Activated CD4-positive, alpha-beta T cell treated with anti-CD3 and anti-CD28 coated beads, Interleukin-2, amount 10 ng/mL, durations not matched to agents 24 days and 14 days (primary cell): ENCODE measurements at regions of chr3 and their contacts with region 1.

Region 1: DNA sequence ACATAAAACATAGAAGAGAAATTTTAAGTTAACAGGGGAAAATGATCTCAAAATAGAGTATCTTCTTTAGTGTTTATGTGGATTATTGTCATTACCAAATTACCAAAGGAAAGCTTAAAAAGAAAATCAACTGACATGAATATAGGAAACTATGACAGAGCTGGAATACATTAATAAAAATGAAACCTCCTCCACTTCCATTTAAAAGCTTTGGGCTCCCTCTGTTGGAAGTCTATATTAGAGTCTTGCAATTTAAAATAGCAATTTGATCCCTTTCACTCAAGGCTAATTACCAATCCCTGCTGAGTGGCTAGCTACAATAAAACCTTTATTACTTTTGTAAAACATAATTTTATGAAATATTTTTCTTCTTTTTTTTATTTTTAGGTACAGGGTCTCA is 61.4 kb upstream of the IMPG2 start:
- DNase-seq: no peak
- H3K4me3 Mint-ChIP-seq: no peak overlapping the region
- H3K27ac Mint-ChIP-seq: no peak overlapping the region
- H3K4me1 Mint-ChIP-seq: peaks cover 27% of the 10 kb centered on the region
- H3K27me3 Mint-ChIP-seq: no peaks in the 10 kb centered on the region

Region 2: GRCh38 chr3:100316641-100317069 is 1065.2 kb before region 1 on chr3:
- intact Hi-C with region 1: loop called (anchors 2 kb)
- DNase-seq: peak; percentile 86
- H3K4me3 Mint-ChIP-seq: peak overlapping the region; percentile 40
- H3K27ac Mint-ChIP-seq: peak overlapping the region; percentile 55
- H3K4me1 Mint-ChIP-seq: peaks cover 11% of the 10 kb centered on the region
- H3K27me3 Mint-ChIP-seq: no peaks in the 10 kb centered on the region

Region 3: DNA sequence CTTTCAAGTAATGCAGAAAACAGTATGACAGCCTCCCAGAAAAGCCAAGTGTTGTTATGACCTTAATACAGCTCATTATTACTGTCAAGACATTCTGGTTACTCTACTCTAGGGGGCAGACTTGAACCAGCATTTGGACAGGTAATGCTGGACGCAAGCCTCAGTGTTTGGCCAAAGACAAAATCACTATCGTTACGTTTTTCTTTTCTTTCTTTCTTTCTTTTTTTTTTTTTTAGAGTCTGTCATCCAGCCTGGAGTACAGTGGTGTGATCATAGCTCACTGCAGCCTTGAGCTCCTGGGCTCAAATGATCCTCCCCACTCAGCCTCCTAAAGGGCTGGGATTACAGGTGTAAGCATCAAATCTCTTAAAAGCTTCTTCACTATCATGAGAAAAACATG is 918.8 kb before region 1 on chr3:
- intact Hi-C with region 1: loop called (anchors 2 kb)
- DNase-seq: peak; percentile 70
- H3K4me3 Mint-ChIP-seq: no peak overlapping the region
- H3K27ac Mint-ChIP-seq: no peak overlapping the region
- H3K4me1 Mint-ChIP-seq: peaks cover 5% of the 10 kb centered on the region
- H3K27me3 Mint-ChIP-seq: no peaks in the 10 kb centered on the region

Region 4: GRCh38 chr3:100737334-100737733 is 644.5 kb before region 1 on chr3:
- intact Hi-C with region 1: loop called (anchors 5 kb)
- DNase-seq: no peak
- H3K4me3 Mint-ChIP-seq: no peak overlapping the region
- H3K27ac Mint-ChIP-seq: no peak overlapping the region
- H3K4me1 Mint-ChIP-seq: peaks cover 13% of the 10 kb centered on the region
- H3K27me3 Mint-ChIP-seq: no peaks in the 10 kb centered on the region

Region 5: GRCh38 chr3:101017017-101017416 is 364.8 kb before region 1 on chr3:
- intact Hi-C with region 1: no loop called
- DNase-seq: no peak
- H3K4me3 Mint-ChIP-seq: no peak overlapping the region
- H3K27ac Mint-ChIP-seq: no peak overlapping the region
- H3K4me1 Mint-ChIP-seq: no peaks in the 10 kb centered on the region
- H3K27me3 Mint-ChIP-seq: peaks cover 2% of the 10 kb centered on the region

Region 6: DNA sequence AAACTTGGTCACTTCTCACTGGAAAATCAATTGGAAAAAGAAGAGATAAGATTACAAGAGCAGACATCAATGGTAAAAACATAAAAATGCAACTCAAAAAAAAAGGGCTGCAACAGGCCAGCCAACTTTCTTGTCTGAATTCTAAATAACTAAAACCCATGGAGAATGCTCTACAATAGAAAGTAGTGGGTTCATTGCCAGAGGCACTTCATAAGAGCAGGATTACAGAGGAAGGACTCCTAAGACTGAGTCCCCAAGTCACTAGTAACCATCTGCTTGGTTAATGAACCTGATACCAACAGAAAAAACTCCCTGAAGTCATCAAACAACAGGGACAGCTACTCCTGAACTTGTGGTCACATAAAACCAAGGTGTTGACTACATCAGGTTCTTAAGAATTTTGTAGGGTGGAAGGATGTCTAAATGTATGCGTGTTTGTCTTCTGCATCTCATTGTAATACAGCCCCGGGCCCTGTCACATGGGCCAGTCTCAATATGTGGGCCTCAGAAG is 210.1 kb before region 1 on chr3:
- intact Hi-C with region 1: loop called (anchors 1 kb)
- DNase-seq: no peak
- H3K4me3 Mint-ChIP-seq: no peak overlapping the region
- H3K27ac Mint-ChIP-seq: peak overlapping the region; percentile 56
- H3K4me1 Mint-ChIP-seq: peaks cover 4% of the 10 kb centered on the region
- H3K27me3 Mint-ChIP-seq: no peaks in the 10 kb centered on the region

Region 7: DNA sequence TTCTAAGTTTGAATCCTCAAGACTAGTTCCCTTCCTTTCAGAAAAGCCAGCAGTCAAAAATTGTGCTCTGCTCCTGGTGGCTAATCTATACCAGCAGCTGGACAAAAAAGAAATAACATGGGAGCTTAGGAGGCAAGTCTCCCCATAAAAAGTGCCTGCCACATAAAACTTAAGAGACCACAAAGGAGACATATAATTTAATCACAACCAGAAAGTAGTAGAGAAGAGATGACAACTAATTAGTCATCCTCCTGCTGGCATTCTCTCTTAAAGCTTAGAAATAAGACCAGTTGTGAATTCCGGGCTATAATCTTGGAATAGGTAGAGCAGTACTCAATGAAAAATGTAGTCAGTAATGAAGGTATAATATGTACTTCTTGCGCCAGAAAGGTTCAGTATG is 41.2 kb before region 1 on chr3:
- intact Hi-C with region 1: no loop called
- DNase-seq: no peak
- H3K4me3 Mint-ChIP-seq: no peak overlapping the region
- H3K27ac Mint-ChIP-seq: no peak overlapping the region
- H3K4me1 Mint-ChIP-seq: peaks cover 1% of the 10 kb centered on the region
- H3K27me3 Mint-ChIP-seq: no peaks in the 10 kb centered on the region

Region 8: GRCh38 chr3:101643861-101644613 is 262.2 kb after region 1 on chr3:
- intact Hi-C with region 1: loop called (anchors 5 kb)
- DNase-seq: peak; percentile 78
- H3K4me3 Mint-ChIP-seq: peak overlapping the region; percentile 23
- H3K27ac Mint-ChIP-seq: peak overlapping the region; percentile 75
- H3K4me1 Mint-ChIP-seq: peaks cover 18% of the 10 kb centered on the region
- H3K27me3 Mint-ChIP-seq: no peaks in the 10 kb centered on the region